ENCODE measurements at regions of chr1 and their contacts with region 1.

Region 1: DNA sequence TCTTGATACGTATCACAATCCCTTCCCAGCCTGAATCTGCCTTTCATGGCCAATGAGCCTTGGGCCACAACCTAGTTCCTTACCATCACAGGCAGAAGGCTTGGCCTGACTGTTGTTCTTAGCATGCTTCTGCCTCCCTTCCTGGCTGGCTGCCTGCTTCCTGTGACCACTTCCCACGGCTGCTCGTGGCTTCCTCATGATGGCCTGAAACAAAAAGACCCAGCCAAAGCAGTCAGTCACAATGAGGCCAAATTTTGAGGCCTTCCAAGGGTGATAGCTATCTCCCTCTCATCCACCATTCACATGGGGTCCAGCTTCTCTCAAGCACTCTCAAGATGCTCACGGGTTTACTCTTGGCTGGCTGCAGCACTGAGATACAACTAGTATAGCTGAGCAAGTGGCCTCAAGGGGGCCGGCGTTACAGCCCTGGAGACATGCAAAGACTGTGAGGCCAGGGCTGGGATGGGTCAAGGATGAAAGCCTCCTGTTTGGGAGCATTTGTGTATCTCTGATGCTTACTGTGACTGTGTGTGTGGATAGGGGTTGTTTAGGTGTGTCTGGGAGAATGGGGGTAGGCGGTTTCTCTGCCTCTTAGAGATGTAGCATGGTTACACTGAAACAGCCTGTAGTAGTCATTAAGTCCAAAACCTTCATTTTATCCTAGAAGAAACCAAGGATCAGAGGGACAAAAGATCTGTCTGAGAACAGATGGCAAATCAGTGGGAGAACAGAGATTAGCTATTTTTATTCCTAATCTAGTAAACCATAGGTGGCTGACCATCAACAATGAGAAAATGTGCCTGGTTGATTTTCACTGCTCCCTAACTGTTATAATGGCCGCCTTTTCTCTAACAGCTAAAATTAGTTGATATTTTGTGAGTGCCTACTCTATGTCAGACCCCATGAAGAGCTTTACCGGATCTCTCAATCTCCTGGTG is 5.4 kb upstream of the TOE1 start:
- DNase-seq: no peak
- H3K4me3 ChIP-seq: no peak overlapping the region
- H3K27ac ChIP-seq: no peak overlapping the region
- H3K4me1 ChIP-seq: peaks cover 0 to 5% (median under 1%) of the 10 kb centered on the region in 4 experiments; a peak in 3 of 7 replicates
- H3K27me3 ChIP-seq: no peaks in the 10 kb centered on the region
- CTCF ChIP-seq: peak in 2 of 3 experiments; percentile 22 to 51; a peak in 2 of 4 replicates
- EP300 ChIP-seq: no peak
- POLR2A ChIP-seq: no peak
- RAD21 ChIP-seq: peak; percentile 10 to 37; a peak in 3 of 4 replicates

Region 2: GRCh38 chr1:45348716-45349677 is 14.4 kb after region 1 on chr1:
- CTCF ChIA-PET with region 1: interaction called, 139 read pairs
- POLR2A ChIA-PET with region 1: interaction called, 472 read pairs
- DNase-seq: no peak
- H3K4me3 ChIP-seq: no peak overlapping the region
- H3K27ac ChIP-seq: no peak overlapping the region
- H3K4me1 ChIP-seq: no peaks in the 10 kb centered on the region
- H3K27me3 ChIP-seq: no peaks in the 10 kb centered on the region
- CTCF ChIP-seq: no peak
- EP300 ChIP-seq: no peak
- POLR2A ChIP-seq: no peak
- RAD21 ChIP-seq: no peak

Measured in H1 (cell line).